ENCODE measurements at regions of chr18 and their contacts with region 1.

Region 1: DNA sequence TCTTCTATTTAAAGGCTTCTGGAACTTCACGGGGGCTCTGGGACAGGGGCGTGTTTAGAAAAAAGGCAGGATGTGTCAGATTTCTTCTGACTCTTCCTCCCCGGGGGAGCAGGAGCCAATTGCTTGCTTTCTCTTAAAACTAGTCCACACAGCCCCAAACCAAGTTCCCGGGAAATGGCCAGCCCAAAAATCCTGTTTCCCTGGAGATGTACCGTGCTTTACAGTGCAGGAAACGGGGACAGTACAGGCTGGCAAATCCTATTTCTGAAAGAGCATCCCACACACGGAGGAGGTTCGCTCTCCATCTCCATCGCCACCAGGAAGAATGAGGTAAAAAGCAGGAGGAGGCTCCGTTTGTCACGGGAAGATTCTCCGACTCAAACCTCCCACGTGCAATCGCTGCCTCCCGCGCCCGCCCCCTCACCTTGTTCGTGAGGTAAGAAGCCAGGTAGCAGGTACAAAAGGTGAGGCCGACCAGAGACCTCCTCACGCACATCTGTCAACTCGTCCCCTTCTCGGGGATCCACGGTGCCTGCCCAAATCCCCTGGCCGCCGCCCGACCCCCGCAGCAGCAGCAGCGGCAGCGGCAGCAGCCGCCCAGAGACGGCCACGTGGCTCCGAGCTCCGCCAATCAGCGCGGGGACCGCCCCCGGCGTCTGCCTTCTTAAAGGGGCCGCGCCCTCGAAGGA is 15.6 kb upstream of the RIOK3 start:
- DNase-seq: peak; percentile 90
- H3K4me3 ChIP-seq: peak overlapping the region; percentile 66 to 79 (median 68)
- H3K27ac ChIP-seq: peak overlapping the region; percentile 56 to 69 (median 64)
- H3K4me1 ChIP-seq: peaks cover 0 to 14% (median 12%) of the 10 kb centered on the region in 4 donors
- H3K27me3 ChIP-seq: no peaks in the 10 kb centered on the region
- CTCF ChIP-seq: no peak
- EP300 ChIP-seq: no peak
- POLR2A ChIP-seq: no peak

Region 2: DNA sequence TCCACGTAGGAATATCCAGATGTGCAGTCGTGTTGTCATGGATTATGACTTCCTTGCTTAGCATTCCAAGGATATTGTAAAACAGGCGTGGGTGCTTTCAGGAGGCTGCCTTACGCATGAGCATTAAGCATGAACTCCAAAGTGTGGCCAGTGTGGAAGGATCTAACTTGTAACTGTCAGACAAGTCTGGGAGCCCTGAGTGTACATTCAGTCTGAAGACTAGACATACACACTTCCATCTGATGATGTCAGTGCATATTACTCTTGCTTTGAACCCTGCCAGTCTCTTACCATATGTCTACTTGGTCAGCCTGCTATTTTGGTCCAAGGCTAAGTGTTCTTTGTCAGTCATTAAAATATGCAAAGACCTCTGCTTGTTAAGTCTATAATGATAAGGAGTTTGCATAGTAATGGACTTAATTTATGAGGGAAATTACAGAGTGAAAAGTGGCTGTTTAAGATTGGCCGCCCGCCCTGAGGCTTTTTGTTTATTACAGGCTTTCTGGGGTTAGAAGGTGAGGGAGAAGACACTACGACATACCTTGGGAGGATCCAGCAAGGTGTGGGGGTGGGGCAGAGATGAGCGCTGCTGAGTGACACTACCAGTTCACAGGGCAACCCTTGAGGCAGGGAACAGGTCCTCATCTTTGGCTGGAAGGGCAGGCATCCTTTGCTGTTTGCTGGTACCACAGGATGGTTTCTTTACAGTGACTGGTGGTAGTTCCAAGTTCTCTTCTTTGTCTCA is 253.9 kb before region 1 on chr18:
- intact Hi-C with region 1: no loop called
- DNase-seq: no peak
- H3K4me3 ChIP-seq: no peak overlapping the region
- H3K27ac ChIP-seq: no peak overlapping the region
- H3K4me1 ChIP-seq: peaks cover 0 to 14% (median 9%) of the 10 kb centered on the region in 4 donors
- H3K27me3 ChIP-seq: no peaks in the 10 kb centered on the region
- CTCF ChIP-seq: no peak
- EP300 ChIP-seq: no peak
- POLR2A ChIP-seq: no peak

Region 3: DNA sequence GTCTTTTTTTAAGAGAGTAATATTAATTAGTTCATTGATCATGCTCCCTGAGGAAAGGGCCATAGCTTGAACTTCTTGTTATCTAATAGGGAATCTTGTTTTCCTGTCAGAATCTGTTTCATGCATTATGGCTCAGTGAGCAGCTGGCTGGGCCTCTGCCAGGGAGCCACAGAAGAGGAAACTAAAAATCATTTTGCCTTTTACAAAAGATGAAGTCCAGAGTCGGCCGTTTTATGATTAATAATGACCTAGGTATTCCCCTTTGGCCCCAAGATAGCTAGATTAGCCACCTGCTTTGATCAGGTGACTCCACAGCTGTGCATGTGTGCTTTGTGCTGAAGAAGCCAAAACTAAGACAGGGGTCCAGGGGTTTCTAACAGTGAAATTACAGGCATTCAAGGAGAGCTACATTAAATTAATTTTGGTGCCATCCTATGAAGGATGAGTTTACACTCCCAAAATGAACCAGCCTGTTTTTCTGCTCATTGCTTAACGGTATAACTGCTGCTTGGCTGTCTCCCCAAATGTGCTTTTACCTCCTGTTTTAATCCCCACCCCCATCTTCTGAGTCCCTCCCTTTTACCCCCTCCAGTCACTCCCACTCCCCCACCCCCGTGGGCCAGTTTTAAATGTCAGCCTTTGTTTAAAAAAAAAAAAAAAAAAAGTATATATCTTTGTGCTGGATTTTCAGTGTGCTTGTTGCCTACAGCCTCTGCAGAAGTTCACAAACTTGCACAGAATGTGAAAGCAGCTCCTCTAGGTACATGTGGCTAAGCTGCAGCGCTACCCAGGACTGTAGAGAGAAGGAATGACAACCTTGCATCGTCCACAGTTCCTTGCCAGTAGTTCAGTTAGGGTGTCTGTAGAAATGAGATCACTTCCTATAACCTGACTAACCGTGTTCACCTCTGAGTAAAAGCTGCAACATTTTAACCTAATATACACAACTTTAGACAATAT is 209.1 kb before region 1 on chr18:
- intact Hi-C with region 1: loop called (anchors 5 kb)
- DNase-seq: no peak
- H3K4me3 ChIP-seq: no peak overlapping the region
- H3K27ac ChIP-seq: peak overlapping the region; percentile 67 to 82 (median 77)
- H3K4me1 ChIP-seq: peaks cover 0 to 61% (median 52%) of the 10 kb centered on the region in 4 donors
- H3K27me3 ChIP-seq: no peaks in the 10 kb centered on the region
- CTCF ChIP-seq: no peak
- EP300 ChIP-seq: no peak
- POLR2A ChIP-seq: no peak

Region 4: DNA sequence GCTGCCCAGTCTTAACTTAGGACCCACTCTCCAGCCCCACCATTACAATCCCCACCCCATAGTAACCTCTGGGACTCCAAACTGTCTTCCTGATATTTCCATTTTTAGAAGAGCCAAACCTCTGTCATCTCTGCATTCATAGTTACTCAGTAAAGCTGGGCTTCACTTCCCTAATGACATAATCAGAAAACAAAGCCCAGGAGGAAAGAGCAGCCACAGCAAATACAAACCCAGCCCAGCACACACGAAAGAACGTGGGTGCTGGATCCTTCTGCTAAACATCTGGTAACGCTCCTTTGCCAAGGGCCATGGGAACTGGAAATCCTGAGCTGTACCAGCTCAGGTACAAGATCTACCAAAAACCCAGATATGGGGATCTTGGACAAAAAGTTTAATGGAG is 21.2 kb before region 1 on chr18:
- intact Hi-C with region 1: no loop called
- DNase-seq: no peak
- H3K4me3 ChIP-seq: no peak overlapping the region
- H3K27ac ChIP-seq: no peak overlapping the region
- H3K4me1 ChIP-seq: no peaks in the 10 kb centered on the region
- H3K27me3 ChIP-seq: no peaks in the 10 kb centered on the region
- CTCF ChIP-seq: no peak
- EP300 ChIP-seq: no peak
- POLR2A ChIP-seq: no peak

Measured in sigmoid colon (tissue), 7 donors.